H1 (cell line): ENCODE measurements at regions of chr7 and their contacts with region 1.

Region 1: GRCh38 chr7:150793569-150794238 is 6.5 kb downstream of the TMEM176B start:
- DNase-seq: no peak
- H3K4me3 ChIP-seq: no peak overlapping the region
- H3K27ac ChIP-seq: no peak overlapping the region
- H3K4me1 ChIP-seq: no peaks in the 10 kb centered on the region; a peak in 1 of 7 replicates
- H3K27me3 ChIP-seq: peaks cover 0 to 6% (median 3%) of the 10 kb centered on the region in 4 experiments; a peak in 6 of 7 replicates
- CTCF ChIP-seq: no peak
- EP300 ChIP-seq: no peak
- POLR2A ChIP-seq: no peak
- RAD21 ChIP-seq: no peak

Region 2: DNA sequence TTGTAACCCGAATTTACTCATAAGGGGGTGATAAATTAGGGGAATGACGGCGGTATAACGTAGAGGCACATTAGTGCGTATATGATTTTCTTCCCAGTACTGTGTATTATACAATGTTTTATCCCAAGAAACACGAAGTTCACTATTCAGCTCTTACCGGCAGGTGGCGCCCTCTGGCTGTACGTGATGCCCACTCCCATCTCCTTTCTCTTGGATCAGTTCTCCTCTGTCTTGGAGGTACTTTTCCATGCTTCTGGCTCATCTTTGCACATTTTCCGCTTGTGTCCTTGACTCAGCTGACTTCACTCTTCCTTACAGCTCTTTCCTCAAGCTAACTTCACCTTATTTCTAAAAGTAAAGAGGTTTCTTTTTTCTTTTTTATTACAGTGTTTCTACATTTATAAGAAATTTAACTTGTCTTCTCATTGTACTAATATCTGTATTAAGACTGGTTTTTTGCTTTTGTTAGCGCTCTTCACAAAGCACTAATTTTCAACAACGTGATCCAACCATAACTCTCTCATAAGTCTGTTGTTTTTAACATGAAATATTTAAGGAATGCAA is 14.9 kb before region 1 on chr7:
- CTCF ChIA-PET with region 1: interaction called, 19 read pairs
- POLR2A ChIA-PET with region 1: interaction called, 3 read pairs
- DNase-seq: peak; percentile 41 to 93
- H3K4me3 ChIP-seq: no peak overlapping the region
- H3K27ac ChIP-seq: no peak overlapping the region
- H3K4me1 ChIP-seq: no peaks in the 10 kb centered on the region
- H3K27me3 ChIP-seq: no peaks in the 10 kb centered on the region; a peak in 1 of 7 replicates
- CTCF ChIP-seq: peak; percentile 85 to 88 (median 88)
- EP300 ChIP-seq: no peak
- POLR2A ChIP-seq: no peak
- RAD21 ChIP-seq: peak; percentile 86 to 91

Region 3: DNA sequence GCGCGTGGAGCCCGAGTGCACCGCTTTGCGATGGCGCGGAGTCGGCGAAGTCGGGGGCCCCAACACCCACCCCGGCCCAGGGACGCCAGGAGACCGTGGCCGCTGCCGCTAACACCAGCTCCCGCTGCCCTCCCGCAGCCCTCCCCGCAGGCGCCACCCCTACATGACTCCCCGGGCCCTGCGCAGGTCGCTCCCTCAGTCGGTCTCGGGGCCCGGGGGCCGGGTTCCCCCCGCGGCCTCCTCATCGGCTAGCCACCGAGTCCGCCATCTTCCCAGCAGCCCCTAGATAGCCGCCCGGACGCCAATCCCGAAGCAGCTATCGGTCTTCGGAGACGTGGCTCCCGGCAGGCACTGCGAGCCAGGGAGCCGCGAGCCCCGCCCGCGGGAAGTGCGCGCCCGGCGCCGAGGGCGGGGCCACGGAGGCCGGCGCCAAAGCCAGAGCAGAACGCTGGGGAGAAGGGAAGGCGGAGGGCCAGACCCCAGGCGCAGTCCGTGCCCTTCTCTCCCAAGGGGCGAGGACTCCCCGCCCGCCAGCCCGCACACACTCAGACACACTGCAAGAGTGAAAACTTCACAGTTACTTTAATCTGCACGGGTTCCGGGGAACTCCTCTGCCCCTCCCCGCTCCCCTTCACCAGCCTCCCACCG is 286.9 kb after region 1 on chr7 and contains the start of gene FASTK:
- CTCF ChIA-PET with region 1: no interaction called
- POLR2A ChIA-PET with region 1: no interaction called
- DNase-seq: peak in 1 of 2 experiments; percentile 88
- H3K4me3 ChIP-seq: peak within 1 kb of the TSS; percentile 79 to 94 (median 88)
- H3K27ac ChIP-seq: peak within 1 kb of the TSS; percentile 76
- H3K4me1 ChIP-seq: peaks cover 3 to 43% (median 27%) of the 10 kb centered on the region in 4 experiments
- H3K27me3 ChIP-seq: peaks cover 0 to 7% (median 5%) of the 10 kb centered on the region in 4 experiments; a peak in 5 of 7 replicates
- CTCF ChIP-seq: no peak; a peak in 1 of 4 replicates
- EP300 ChIP-seq: 0 out of 3 replicates have a peak, but pooled peaks of 1 of the 2 experiments have one; percentile 42
- POLR2A ChIP-seq: peak in 1 of 2 experiments; percentile 62; a peak in 2 of 3 replicates
- RAD21 ChIP-seq: no peak
- total RNA-seq, gene FASTK: 39.4 and 43.8 TPM in 2 replicates